CD4-positive, alpha-beta memory T cell (primary cell): ENCODE measurements at regions of chr21 and their contacts with region 1.

Region 1: DNA sequence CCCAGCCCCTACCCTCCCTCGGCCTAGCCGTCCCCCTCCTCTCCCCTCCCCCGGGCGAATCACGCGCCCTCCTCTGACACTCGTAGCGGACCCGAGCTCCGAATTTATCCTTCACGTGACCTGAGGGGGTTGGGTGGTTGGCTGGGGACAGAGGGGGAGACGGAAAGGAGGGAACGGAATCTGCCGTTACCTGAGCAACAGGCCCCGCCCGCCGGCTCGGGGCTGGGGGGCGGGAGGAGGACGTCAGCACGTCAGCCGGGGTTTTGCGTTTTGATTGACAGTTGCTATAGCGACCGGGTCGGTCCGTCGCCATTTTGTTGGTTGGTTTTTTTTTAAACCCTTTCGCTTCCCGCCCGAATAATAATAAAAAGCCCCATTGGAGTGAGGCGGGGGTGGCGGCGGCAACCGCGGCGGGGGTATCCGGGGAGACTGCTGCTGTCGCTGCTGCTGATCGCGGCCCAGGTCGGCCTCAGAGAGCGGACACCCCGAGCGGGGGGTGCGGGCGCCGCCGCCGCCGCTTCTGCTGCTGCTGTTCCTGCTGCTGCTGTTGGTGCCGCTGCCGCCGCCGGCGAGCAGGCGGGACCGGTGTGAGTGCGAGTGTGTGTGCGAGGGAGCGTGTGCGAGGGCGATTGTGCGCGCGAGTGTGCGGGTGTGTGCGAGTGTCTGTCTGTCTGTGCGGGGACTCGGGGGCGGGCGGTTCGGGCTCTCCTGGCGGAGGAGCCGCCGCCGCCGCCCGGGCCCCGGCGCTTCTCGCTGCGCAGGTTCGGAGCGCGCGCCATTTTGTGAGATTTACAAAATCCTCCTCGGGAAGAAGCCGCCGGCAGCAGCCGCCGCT is at the start of gene DYRK1A:
- DNase-seq: peak; percentile 98 to 99 (median 99)
- H3K4me3 ChIP-seq: peak within 1 kb of the TSS; percentile 1 to 69
- H3K4me3 Mint-ChIP-seq: peak within 1 kb of the TSS; percentile 95 to 100 (median 100)
- H3K27ac ChIP-seq: peak within 1 kb of the TSS; percentile 98
- H3K27ac Mint-ChIP-seq: peak within 1 kb of the TSS; percentile 99 to 100 (median 100)
- H3K4me1 ChIP-seq: peaks cover 43% of the 10 kb centered on the region
- H3K4me1 Mint-ChIP-seq: peaks cover 32 to 61% (median 40%) of the 10 kb centered on the region in 4 donors
- H3K27me3 ChIP-seq: no peaks in the 10 kb centered on the region
- H3K27me3 Mint-ChIP-seq: peaks cover 1 to 2% of the 10 kb centered on the region in 2 donors
- total RNA-seq, gene DYRK1A: 126 to 130 TPM

Region 2: GRCh38 chr21:36966066-36966820 is 400.5 kb before region 1 on chr21 and contains the start of gene HLCS:
- CTCF ChIA-PET with region 1: no interaction called
- POLR2A ChIA-PET with region 1: no interaction called
- intact Hi-C with region 1: loop called (anchors 10 kb)
- DNase-seq: peak; percentile 72 to 80 (median 76)
- H3K4me3 ChIP-seq: peak within 1 kb of the TSS in 1 of 2 donors; percentile 54
- H3K4me3 Mint-ChIP-seq: peak within 1 kb of the TSS; percentile 76 to 92 (median 87)
- H3K27ac ChIP-seq: peak within 1 kb of the TSS; percentile 58
- H3K27ac Mint-ChIP-seq: peak within 1 kb of the TSS; percentile 81 to 96 (median 88)
- H3K4me1 ChIP-seq: peaks cover 14% of the 10 kb centered on the region
- H3K4me1 Mint-ChIP-seq: peaks cover 7 to 20% (median 15%) of the 10 kb centered on the region in 4 donors
- H3K27me3 ChIP-seq: no peaks in the 10 kb centered on the region
- H3K27me3 Mint-ChIP-seq: no peaks in the 10 kb centered on the region
- total RNA-seq, gene HLCS: 13.9 to 14.7 TPM

Region 3: DNA sequence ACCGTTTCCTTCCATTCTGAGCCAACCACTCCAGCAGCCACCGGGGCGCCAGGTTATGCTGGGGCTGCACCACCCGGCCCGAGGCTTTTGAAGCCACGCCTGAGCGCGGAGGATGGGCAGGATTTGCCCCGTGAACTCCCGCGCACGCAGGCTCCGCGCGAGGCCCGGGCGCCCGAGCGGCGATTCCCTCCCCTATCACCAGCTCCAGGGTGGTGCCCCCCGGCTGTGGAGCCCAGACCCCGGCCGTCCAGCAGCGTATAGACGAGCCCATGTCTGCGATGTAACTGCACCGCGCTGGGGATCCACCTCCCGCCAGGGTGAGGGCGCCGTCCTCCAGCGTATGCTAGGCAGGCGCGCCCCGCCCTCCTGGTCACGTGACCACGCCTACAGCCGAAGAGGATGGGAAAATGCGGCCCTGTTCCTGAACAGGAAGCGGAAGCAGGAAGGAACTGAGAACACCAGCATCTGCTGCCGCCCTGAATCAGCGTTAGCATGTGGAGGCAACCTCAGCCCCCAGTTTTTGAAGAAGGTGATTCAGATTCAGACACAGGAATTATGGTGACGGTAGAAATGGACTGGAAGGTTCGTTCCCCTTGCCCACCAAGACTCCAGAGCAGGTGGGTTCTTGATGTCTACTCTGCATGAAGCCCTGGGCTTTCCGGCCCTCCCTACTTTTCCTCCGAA is 145.6 kb before region 1 on chr21:
- CTCF ChIA-PET with region 1: interaction called, 4 read pairs
- POLR2A ChIA-PET with region 1: interaction called, 16 read pairs
- intact Hi-C with region 1: loop called (anchors 1 kb)
- DNase-seq: peak; percentile 86 to 95 (median 88)
- H3K4me3 ChIP-seq: peak overlapping the region; percentile 76 to 86
- H3K4me3 Mint-ChIP-seq: peak overlapping the region; percentile 79 to 96 (median 92)
- H3K27ac ChIP-seq: peak overlapping the region; percentile 75
- H3K27ac Mint-ChIP-seq: peak overlapping the region; percentile 80 to 96 (median 94)
- H3K4me1 ChIP-seq: peaks cover 45% of the 10 kb centered on the region
- H3K4me1 Mint-ChIP-seq: peaks cover 29 to 51% (median 36%) of the 10 kb centered on the region in 4 donors
- H3K27me3 ChIP-seq: no peaks in the 10 kb centered on the region
- H3K27me3 Mint-ChIP-seq: no peaks in the 10 kb centered on the region

Region 4: DNA sequence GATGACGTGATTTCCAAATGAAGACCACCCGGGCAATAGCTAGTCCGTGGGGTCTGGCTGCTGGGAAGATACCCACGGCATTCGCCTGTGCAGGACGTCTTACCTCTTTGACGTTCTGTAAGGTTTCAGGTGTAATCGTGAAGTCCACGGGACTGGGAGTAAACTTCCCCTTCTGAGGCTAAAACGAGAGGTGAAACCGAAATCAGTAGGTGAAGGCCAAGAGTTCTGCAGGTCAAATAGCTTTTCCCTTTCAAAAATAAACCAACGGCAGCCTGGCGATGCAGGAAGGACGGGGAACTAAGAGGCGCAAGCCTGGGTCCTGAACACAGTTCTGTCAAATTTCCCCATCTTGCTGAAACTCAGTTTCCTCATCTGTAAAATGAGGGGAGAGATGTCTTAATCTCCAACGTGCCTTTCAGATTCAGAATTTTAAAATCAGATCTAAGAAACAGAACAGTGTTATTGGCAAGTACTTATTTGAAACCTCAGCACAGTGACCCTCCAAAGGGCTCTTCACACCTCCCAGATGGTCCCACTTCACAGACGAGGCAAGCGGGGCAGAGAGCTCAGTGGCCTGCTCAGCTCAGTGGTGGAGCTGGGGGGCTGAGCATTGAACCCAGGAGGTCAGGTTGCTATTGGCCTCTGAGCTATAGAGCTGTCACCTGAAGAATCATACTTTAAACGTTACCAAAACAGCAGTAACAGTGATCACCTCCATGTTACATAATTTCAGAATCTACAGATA is 134.3 kb before region 1 on chr21:
- CTCF ChIA-PET with region 1: no interaction called
- POLR2A ChIA-PET with region 1: no interaction called
- intact Hi-C with region 1: no loop called
- DNase-seq: no peak
- H3K4me3 ChIP-seq: no peak overlapping the region
- H3K4me3 Mint-ChIP-seq: no peak overlapping the region
- H3K27ac ChIP-seq: no peak overlapping the region
- H3K27ac Mint-ChIP-seq: peak overlapping the region in 2 of 7 donors; percentile 17 to 48
- H3K4me1 ChIP-seq: no peaks in the 10 kb centered on the region
- H3K4me1 Mint-ChIP-seq: peaks cover 2 to 6% (median 4%) of the 10 kb centered on the region in 4 donors
- H3K27me3 ChIP-seq: no peaks in the 10 kb centered on the region
- H3K27me3 Mint-ChIP-seq: no peaks in the 10 kb centered on the region

Region 5: DNA sequence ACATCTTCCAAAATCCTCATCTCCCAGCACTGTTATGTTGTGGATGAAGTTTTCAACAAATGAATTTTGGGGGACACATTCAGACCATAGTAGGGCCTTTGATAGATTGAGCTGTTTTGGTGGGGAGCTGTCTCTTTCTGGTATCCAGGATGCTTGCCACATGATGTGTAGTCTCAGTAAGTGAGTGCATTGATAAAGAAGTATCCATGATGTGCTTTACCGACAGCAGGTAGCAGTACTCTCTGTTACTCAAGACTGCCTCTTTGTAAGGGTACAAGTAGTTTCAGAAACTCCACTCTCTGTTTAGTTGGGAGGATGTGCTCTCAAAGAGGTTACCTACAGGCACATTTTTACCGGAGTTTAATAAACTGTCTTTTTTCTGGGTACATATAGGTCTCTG is 26.3 kb after region 1 on chr21:
- CTCF ChIA-PET with region 1: no interaction called
- POLR2A ChIA-PET with region 1: interaction called, 13 read pairs
- intact Hi-C with region 1: no loop called
- DNase-seq: no peak
- H3K4me3 ChIP-seq: no peak overlapping the region
- H3K4me3 Mint-ChIP-seq: peak overlapping the region in 6 of 8 donors; percentile 23 to 71 (median 46)
- H3K27ac ChIP-seq: no peak overlapping the region
- H3K27ac Mint-ChIP-seq: peak overlapping the region in 6 of 7 donors; percentile 7 to 81 (median 28)
- H3K4me1 ChIP-seq: peaks cover 87% of the 10 kb centered on the region
- H3K4me1 Mint-ChIP-seq: peaks cover 63 to 90% (median 78%) of the 10 kb centered on the region in 4 donors
- H3K27me3 ChIP-seq: no peaks in the 10 kb centered on the region
- H3K27me3 Mint-ChIP-seq: no peaks in the 10 kb centered on the region

Region 6: GRCh38 chr21:37435120-37435519 is 68.4 kb after region 1 on chr21:
- CTCF ChIA-PET with region 1: interaction called, 4 read pairs
- POLR2A ChIA-PET with region 1: interaction called, 3 read pairs
- intact Hi-C with region 1: loop called (anchors 2 kb)
- DNase-seq: peak; percentile 61 to 78 (median 72)
- H3K4me3 ChIP-seq: no peak overlapping the region
- H3K4me3 Mint-ChIP-seq: no peak overlapping the region
- H3K27ac ChIP-seq: no peak overlapping the region
- H3K27ac Mint-ChIP-seq: no peak overlapping the region
- H3K4me1 ChIP-seq: peaks cover 90% of the 10 kb centered on the region
- H3K4me1 Mint-ChIP-seq: peaks cover 39 to 45% (median 39%) of the 10 kb centered on the region in 4 donors
- H3K27me3 ChIP-seq: no peaks in the 10 kb centered on the region
- H3K27me3 Mint-ChIP-seq: no peaks in the 10 kb centered on the region

Region 7: DNA sequence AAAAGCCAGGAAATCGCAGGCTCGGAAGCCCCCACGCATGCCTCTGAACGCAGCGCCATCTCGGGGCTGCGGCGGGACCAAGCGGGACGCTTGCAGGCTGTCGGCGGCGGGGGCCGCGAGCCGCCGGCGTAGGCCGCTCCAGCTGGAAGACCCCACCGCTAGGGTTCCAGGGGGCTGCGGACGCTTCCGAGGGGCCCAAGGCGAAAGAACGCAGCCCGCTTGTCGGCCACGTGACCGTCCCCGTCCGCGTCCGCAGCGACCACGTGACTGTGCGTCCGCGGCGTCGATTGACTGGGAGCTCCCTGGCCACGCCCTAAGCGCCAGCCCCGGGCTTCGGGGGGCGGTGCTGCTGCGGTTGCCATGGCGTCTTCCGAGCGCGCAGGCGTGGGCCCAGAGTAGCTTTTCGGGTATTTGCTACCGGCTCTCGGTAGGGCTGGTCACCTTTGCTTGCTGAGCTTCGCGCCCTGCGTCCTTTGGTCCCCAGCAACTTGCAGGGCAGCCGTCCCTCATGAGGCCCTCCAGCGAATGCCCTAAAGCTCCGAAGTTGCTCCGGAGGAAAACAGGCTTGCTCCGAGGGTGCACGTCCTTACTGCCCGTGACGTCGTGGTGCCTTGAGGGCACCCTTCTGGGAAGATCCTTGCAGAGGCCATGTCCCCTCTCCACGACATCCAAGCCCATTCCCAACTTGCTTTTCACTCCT is 197.1 kb after region 1 on chr21:
- CTCF ChIA-PET with region 1: interaction called, 6 read pairs
- POLR2A ChIA-PET with region 1: interaction called, 30 read pairs
- intact Hi-C with region 1: loop called (anchors 1 kb)
- DNase-seq: peak; percentile 91 to 92 (median 92)
- H3K4me3 ChIP-seq: peak overlapping the region; percentile 94 to 98
- H3K4me3 Mint-ChIP-seq: peak overlapping the region; percentile 95 to 100 (median 97)
- H3K27ac ChIP-seq: peak overlapping the region; percentile 91
- H3K27ac Mint-ChIP-seq: peak overlapping the region; percentile 98 to 100 (median 100)
- H3K4me1 ChIP-seq: peaks cover 17% of the 10 kb centered on the region
- H3K4me1 Mint-ChIP-seq: peaks cover 5 to 28% (median 14%) of the 10 kb centered on the region in 4 donors
- H3K27me3 ChIP-seq: no peaks in the 10 kb centered on the region
- H3K27me3 Mint-ChIP-seq: no peaks in the 10 kb centered on the region